H1 (cell line): ENCODE measurements at regions of chr7 and their contacts with region 1.

Region 1: GRCh38 chr7:66075590-66076461 is at the start of gene ASL:
- DNase-seq: peak; percentile 61 to 99
- H3K4me3 ChIP-seq: peak within 1 kb of the TSS; percentile 81 to 100 (median 84)
- H3K27ac ChIP-seq: peak within 1 kb of the TSS; percentile 72; the same call in 1 of the 2 replicates
- H3K4me1 ChIP-seq: peaks cover 0 to 10% (median 6%) of the 10 kb centered on the region in 4 experiments; a peak in 4 of 7 replicates
- H3K27me3 ChIP-seq: no peaks in the 10 kb centered on the region
- CTCF ChIP-seq: no peak
- EP300 ChIP-seq: 0 out of 3 replicates have a peak, but pooled peaks of 1 of the 2 experiments have one; percentile 45
- POLR2A ChIP-seq: peak; percentile 84 to 91
- RAD21 ChIP-seq: no peak
- total RNA-seq, gene ASL: 23.3 and 23.4 TPM in 2 replicates

Region 2: GRCh38 chr7:66114793-66115649 is 39.2 kb after region 1 on chr7 and contains the start of gene CRCP:
- CTCF ChIA-PET with region 1: no interaction called
- POLR2A ChIA-PET with region 1: interaction called, 10 read pairs
- DNase-seq: peak; percentile 46 to 86
- H3K4me3 ChIP-seq: peak within 1 kb of the TSS; percentile 78 to 94 (median 88)
- H3K27ac ChIP-seq: peak within 1 kb of the TSS; percentile 91
- H3K4me1 ChIP-seq: peaks cover 0 to 4% (median under 1%) of the 10 kb centered on the region in 4 experiments; a peak in 2 of 7 replicates
- H3K27me3 ChIP-seq: no peaks in the 10 kb centered on the region
- CTCF ChIP-seq: no peak
- EP300 ChIP-seq: no peak
- POLR2A ChIP-seq: peak; percentile 59 to 77
- RAD21 ChIP-seq: no peak
- total RNA-seq, gene CRCP: 29.2 and 29.3 TPM in 2 replicates

Region 3: GRCh38 chr7:66157060-66157459 is 81.2 kb after region 1 on chr7:
- CTCF ChIA-PET with region 1: no interaction called
- POLR2A ChIA-PET with region 1: no interaction called
- DNase-seq: no peak
- H3K4me3 ChIP-seq: no peak overlapping the region
- H3K27ac ChIP-seq: no peak overlapping the region
- H3K4me1 ChIP-seq: peaks cover 4 to 6% (median 5%) of the 10 kb centered on the region in 4 experiments
- H3K27me3 ChIP-seq: no peaks in the 10 kb centered on the region; a peak in 1 of 7 replicates
- CTCF ChIP-seq: no peak
- EP300 ChIP-seq: no peak
- POLR2A ChIP-seq: no peak
- RAD21 ChIP-seq: no peak